ENCODE measurements at regions of chr7 and their contacts with region 1.

Region 1: DNA sequence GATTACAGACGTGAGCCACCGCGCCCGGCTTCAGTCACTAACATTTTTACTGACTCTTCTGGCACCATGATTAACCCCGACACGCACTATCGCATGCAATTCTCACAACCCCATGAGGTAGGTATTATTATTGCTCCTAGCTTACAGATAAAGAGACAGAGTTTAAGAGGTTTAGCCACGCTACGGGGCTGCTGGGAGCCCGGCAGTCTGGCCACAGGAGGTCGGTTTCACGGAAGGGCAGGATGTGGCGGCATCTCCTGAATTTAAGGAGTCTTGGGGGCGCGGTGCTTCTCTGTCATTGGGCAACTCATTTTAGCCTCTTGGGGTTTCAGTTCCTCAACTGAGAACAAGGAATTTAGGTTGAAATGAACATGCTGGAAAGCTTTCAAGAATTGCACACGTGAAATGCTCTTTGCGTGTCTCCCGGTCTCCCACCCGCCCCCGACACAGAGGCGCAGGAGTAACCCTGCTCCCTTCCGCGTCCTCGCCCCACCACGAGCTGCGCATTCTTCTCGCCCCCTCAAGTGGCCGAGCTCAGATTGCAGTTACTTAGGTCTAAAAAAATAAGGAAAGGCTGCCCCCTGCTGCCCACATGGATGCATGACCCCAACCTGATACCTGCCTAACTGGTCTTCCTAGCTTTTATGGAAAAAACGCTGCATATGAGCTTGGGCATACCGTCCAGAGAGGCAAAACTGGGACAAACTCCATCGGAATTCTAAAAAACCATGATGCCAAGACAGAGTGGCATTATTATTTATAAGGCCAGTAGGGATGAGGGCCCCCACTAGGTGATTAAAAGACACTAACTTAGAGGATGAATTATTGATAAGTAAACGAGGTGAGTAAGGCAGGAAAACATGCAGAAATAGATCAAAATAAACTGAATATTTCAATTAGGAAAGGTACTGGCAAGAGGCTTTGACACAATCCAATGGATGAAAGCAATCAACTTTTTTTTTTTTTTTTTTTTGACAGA is 12.4 kb downstream of the PRSS2 start:
- DNase-seq: peak; percentile 46 to 92
- H3K4me3 ChIP-seq: peak overlapping the region; percentile 23 to 58
- H3K27ac ChIP-seq: no peak overlapping the region
- H3K4me1 ChIP-seq: no peaks in the 10 kb centered on the region
- H3K27me3 ChIP-seq: no peaks in the 10 kb centered on the region
- CTCF ChIP-seq: peak; percentile 90 to 99 (median 96)

Region 2: GRCh38 chr7:142620402-142620801 is 162.8 kb before region 1 on chr7:
- intact Hi-C with region 1: no loop called
- DNase-seq: no peak
- H3K4me3 ChIP-seq: no peak overlapping the region
- H3K27ac ChIP-seq: no peak overlapping the region
- H3K4me1 ChIP-seq: no peaks in the 10 kb centered on the region
- H3K27me3 ChIP-seq: no peaks in the 10 kb centered on the region
- CTCF ChIP-seq: no peak

Region 3: DNA sequence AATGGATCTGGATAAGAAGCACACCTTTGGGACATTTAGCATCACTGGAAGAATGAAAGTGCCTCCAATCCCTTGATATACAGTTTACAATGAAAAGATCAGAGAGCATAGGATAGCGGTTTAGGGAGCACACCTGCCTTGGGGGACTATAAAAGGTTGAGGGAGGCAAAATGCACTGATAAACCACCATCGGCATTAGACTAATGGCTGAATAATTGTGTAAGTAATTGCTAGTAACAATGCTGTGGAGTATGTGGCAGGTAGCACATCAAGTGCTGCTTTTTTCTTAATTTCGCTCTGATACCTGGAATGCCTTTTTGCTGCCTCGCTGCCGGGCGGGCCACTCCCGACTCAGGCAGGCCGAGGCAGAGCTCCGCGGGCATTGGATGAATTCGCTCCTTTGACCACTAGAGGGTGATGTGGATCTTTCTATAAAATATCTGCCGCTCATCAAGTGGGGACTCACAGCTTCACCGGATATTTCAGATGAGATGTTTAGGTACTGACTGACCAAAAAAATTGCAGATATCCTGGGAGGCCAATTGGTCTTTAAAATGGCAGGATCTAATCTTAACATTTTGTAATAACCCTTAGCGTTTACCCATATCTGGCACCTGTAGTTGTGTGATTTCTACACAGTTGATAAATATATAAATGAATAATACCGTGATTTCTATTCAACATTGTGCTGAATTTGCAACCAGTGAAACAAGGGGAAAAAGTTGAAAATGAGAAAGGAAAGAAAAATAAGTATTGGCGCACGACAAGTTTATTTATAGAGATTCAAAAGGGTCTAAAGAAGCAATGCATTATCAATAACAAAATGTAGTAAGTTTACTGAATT is 150.7 kb before region 1 on chr7:
- intact Hi-C with region 1: loop called (anchors 1 kb)
- DNase-seq: peak in 1 of 2 donors; percentile 69
- H3K4me3 ChIP-seq: no peak overlapping the region
- H3K27ac ChIP-seq: no peak overlapping the region
- H3K4me1 ChIP-seq: no peaks in the 10 kb centered on the region
- H3K27me3 ChIP-seq: no peaks in the 10 kb centered on the region
- CTCF ChIP-seq: peak; percentile 51 to 71 (median 63)

Region 4: DNA sequence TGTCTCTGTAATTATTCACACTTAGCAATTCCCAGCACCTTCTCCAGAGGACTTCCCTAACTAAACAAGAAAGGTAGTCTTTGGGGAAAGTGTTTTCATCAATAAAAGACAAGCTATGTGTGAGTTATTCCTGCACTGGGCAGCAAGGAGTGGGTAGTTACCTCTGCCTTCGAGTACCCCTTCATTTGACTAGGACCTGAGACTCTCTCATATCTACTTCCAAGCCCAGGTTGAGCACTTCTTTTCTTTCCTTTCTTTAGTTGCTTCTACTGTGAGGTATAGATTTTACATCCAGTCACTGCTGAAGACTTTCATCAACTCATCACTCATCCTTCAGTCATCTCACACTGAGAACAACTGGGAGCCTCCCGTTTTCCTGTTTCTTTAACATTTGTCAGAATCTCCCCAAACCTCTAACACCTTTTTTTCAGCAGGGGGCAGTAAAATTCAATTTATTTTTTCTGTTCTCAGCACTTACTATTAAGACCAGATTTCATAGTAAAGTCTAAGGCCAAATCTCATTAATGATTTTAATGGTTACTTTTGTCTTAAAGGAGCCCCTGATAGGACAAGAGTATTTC is 114.0 kb before region 1 on chr7:
- intact Hi-C with region 1: loop called (anchors 1 kb)
- DNase-seq: no peak
- H3K4me3 ChIP-seq: no peak overlapping the region
- H3K27ac ChIP-seq: no peak overlapping the region
- H3K4me1 ChIP-seq: no peaks in the 10 kb centered on the region
- H3K27me3 ChIP-seq: no peaks in the 10 kb centered on the region
- CTCF ChIP-seq: peak in 2 of 3 experiments; percentile 36 to 52

Region 5: GRCh38 chr7:142711746-142712619 is 71.2 kb before region 1 on chr7:
- intact Hi-C with region 1: loop called (anchors 2 kb)
- DNase-seq: no peak
- H3K4me3 ChIP-seq: no peak overlapping the region
- H3K27ac ChIP-seq: no peak overlapping the region
- H3K4me1 ChIP-seq: no peaks in the 10 kb centered on the region
- H3K27me3 ChIP-seq: no peaks in the 10 kb centered on the region
- CTCF ChIP-seq: peak; percentile 5 to 45 (median 27)

Measured in ascending aorta (tissue), 2 donors.